Activated CD4-positive, alpha-beta T cell treated with anti-CD3 and anti-CD28 coated beads for 36 hours (primary cell): ENCODE measurements at regions of chr6 and their contacts with region 1.

Region 1: DNA sequence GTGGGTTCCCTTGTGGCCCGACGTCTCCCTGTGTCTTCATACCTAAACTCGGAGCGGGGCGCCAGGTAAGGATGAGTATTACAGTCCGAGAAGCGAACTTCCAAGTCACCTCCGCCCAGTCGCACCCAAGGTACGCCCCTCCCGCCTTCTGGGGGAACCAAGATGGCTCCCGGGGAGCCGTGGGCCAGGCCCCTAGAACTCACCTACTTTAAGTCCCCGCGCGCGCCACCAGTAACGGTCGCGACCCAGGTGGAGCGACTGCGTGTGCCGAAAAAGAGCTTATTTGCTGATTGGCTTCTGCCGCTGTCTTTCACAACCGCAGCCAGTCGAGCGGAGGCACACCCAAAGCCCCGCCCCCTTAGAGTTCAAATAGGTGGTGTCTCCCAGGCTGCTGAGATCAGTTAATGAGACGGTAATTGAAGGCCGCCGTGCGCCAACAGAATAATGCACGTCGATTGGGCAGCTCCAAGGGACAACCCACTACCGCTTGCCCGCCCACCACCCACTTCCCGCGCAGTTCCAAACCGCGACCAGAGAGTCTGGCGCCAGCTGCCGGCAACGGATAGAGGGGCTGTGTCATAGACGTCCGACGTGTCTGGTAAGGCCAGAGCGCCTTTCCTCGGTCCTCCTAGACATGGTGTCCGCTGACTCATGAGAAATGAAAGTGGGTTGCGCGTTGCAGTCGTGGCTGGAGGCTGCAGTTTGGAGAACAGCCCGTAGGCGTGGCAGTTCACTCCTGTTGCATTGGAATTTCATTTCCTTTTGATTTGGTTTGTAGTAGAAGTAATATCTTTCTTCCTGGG is at the start of gene MDC1:
- DNase-seq: peak; percentile 100
- ATAC-seq: peak; percentile 78
- H3K4me3 Mint-ChIP-seq: peak within 1 kb of the TSS; percentile 98
- H3K27ac Mint-ChIP-seq: peak within 1 kb of the TSS; percentile 99
- H3K4me1 Mint-ChIP-seq: peaks cover 43% of the 10 kb centered on the region
- H3K27me3 Mint-ChIP-seq: no peaks in the 10 kb centered on the region
- total RNA-seq, gene MDC1: 92.0 to 101 TPM

Region 2: DNA sequence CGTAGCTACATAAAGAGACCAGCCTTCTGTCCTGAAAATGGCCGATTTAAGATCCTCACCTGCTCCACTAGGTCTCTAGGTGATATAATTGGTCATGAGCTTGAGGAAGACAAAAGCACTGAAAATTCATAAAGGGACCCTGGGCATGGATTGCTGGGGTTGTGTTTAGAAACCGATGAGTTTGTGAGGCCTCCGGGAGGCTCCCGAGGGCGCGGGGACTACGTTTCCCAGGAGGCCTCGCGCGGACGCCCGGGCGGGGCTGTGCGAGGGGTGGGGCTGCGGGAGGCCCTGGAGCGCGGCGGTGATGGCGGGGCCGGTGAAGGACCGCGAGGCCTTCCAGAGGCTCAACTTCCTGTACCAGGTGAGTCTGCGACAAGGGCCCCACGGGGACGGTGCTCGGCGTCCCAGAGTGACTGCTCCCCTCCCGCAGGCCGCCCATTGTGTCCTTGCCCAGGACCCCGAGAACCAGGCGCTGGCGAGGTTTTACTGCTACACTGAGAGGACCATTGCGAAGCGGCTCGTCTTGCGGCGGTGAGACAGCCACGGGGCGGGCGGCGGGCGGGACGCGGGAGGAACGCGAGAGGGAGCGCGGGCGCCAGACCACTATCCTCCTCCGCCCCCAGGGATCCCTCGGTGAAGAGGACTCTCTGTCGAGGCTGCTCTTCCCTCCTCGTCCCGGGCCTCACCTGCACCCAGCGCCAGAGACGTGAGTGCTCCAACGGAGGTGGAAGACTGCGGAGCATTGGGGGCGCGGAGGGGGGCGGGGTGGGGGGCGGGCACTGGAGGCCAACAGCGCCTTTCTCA is 372.2 kb before region 1 on chr6 and contains the start of gene RPP21:
- CTCF ChIA-PET with region 1: no interaction called
- POLR2A ChIA-PET with region 1: no interaction called
- intact Hi-C with region 1: loop called in 1 of 2 experiments (anchors 2 kb)
- DNase-seq: peak; percentile 94
- ATAC-seq: peak; percentile 96
- H3K4me3 Mint-ChIP-seq: peak within 1 kb of the TSS; percentile 85
- H3K27ac Mint-ChIP-seq: peak within 1 kb of the TSS; percentile 84
- H3K4me1 Mint-ChIP-seq: peaks cover 41% of the 10 kb centered on the region
- H3K27me3 Mint-ChIP-seq: peaks cover 2% of the 10 kb centered on the region
- total RNA-seq, gene RPP21: 32.6 to 38.1 TPM

Region 3: GRCh38 chr6:30515932-30516753 is 201.1 kb before region 1 on chr6:
- CTCF ChIA-PET with region 1: no interaction called
- POLR2A ChIA-PET with region 1: interaction called, 11 read pairs
- intact Hi-C with region 1: no loop called
- DNase-seq: peak; percentile 96
- ATAC-seq: peak; percentile 87
- H3K4me3 Mint-ChIP-seq: peak overlapping the region; percentile 74
- H3K27ac Mint-ChIP-seq: peak overlapping the region; percentile 98
- H3K4me1 Mint-ChIP-seq: peaks cover 69% of the 10 kb centered on the region
- H3K27me3 Mint-ChIP-seq: no peaks in the 10 kb centered on the region

Region 4: DNA sequence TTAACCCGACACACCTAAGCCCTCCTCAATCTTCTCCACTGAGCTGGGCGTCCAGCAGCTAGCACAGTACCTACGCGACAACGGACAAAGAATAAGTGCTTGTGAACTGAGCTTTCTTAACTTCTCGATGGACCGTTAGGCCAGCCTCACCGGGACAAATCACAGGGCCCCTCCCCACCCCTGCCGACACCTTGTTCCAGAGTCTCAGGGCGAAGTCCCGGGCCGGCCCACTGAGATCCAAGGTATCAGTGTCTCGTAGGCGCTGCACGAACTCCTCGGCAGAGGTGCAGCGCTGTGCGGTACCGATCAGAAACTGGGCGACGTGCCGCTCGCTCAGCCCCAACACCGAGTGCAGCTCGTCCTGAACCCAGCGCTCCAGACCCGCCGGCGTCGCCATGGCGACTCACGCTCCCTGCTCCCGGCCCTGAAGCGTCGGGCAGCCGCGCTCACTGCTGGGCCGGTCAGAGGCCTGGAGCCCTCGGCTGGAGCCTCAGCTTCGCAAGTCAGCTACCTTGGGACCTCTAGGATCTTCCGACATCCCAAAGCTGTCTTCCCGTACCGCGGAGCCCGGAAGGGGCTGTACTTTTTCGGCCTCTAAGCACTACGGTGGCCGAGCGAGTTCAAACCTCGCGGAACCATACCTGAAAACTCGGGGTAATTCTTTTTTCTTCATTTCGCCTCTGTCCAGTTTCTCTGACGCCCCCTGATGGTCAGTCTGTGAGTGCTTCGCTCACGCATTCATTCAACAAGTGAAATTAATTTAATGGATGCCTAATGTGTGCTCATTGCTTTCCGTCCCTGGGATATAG is 44.6 kb before region 1 on chr6 and contains the start of gene DHX16:
- CTCF ChIA-PET with region 1: interaction called, 22 read pairs
- POLR2A ChIA-PET with region 1: interaction called, 5 read pairs
- intact Hi-C with region 1: no loop called
- DNase-seq: peak; percentile 93
- ATAC-seq: peak; percentile 83
- H3K4me3 Mint-ChIP-seq: peak within 1 kb of the TSS; percentile 82
- H3K27ac Mint-ChIP-seq: peak within 1 kb of the TSS; percentile 83
- H3K4me1 Mint-ChIP-seq: peaks cover 27% of the 10 kb centered on the region
- H3K27me3 Mint-ChIP-seq: no peaks in the 10 kb centered on the region
- total RNA-seq, gene DHX16: 34.5 to 36.7 TPM

Region 5: DNA sequence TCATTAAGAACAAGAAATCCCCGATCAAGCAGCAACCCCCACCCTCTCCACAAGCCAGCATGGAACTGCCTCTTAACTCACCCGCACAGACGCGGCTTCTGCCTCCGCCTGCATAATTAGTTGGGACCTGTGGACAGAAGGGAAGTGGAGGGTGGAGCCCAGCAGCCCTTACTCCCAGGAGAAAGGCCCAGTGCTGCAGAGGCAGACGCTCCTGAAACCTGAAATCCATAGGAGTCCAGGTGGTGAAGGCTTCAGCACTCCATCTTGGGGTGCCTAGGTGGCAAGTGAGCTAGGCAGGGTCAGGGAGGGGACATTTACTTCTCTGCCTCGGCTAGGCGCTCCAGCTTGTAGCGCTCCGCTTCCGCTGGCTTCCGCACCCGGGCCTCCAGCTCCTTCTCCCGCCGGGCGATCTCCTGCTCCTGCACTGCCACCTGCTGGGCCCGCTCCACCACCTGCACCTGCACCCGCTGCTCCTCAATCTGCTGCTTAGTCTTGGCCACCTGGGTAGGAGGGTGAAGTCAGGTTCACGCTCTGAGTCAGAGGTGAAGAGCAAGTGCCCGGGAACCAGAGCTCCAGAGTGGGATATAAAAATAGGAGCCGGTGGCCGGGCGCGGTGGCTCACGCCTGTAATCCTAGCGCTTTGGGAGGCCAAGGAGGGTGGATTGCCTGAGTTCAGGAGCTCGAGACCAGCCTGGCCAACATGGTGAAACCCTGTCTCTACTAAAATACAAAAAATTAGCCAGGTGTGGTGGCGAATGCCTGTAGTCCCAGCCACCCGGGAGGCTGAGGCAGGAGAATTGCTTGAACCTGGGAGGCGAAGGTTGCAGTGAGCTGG is 13.6 kb after region 1 on chr6:
- CTCF ChIA-PET with region 1: interaction called, 31 read pairs
- POLR2A ChIA-PET with region 1: interaction called, 11 read pairs
- intact Hi-C with region 1: loop called in 1 of 2 experiments (anchors 2 kb)
- DNase-seq: peak; percentile 94
- ATAC-seq: peak; percentile 75
- H3K4me3 Mint-ChIP-seq: peak overlapping the region; percentile 51
- H3K27ac Mint-ChIP-seq: peak overlapping the region; percentile 65
- H3K4me1 Mint-ChIP-seq: peaks cover 44% of the 10 kb centered on the region
- H3K27me3 Mint-ChIP-seq: no peaks in the 10 kb centered on the region

Region 6: GRCh38 chr6:31158140-31158862 is 441.1 kb after region 1 on chr6 and contains the start of gene TCF19:
- CTCF ChIA-PET with region 1: no interaction called
- POLR2A ChIA-PET with region 1: no interaction called
- intact Hi-C with region 1: loop called in 1 of 2 experiments (anchors 10 kb)
- DNase-seq: peak; percentile 99
- ATAC-seq: peak; percentile 90
- H3K4me3 Mint-ChIP-seq: peak within 1 kb of the TSS; percentile 97
- H3K27ac Mint-ChIP-seq: peak within 1 kb of the TSS; percentile 89
- H3K4me1 Mint-ChIP-seq: peaks cover 39% of the 10 kb centered on the region
- H3K27me3 Mint-ChIP-seq: no peaks in the 10 kb centered on the region
- total RNA-seq, gene TCF19: 82.6 to 88.0 TPM